ENCODE measurements at regions of chr1 and their contacts with region 1.

Region 1: GRCh38 chr1:6343506-6344405 is 49.8 kb downstream of the ACOT7 start:
- DNase-seq: peak; percentile 87
- H3K4me3 ChIP-seq: no peak overlapping the region
- H3K27ac ChIP-seq: no peak overlapping the region
- H3K4me1 ChIP-seq: no peaks in the 10 kb centered on the region
- H3K27me3 ChIP-seq: no peaks in the 10 kb centered on the region
- CTCF ChIP-seq: peak; percentile 97

Region 2: DNA sequence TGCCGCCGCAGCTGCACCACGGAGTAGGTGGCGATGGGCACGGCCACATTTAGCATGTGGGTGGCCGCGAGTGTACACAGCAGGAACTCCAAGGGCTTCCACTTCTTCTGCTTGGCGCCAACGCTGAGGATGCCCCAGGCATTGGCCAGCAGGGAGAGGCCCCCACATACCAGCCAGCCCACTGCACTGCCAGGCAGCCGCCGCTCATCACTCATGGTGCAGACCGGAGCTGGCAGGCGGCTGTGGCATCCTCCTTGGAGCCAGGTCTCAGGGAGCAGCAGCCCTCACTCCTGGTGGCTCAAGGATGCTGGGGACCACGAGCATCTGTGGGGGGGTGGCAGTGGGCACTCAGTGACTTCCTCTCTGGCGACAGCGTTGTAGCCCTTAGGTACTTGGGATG is 89.1 kb before region 1 on chr1:
- CTCF ChIA-PET with region 1: interaction called, 15 read pairs
- POLR2A ChIA-PET with region 1: no interaction called
- intact Hi-C with region 1: no loop called
- DNase-seq: no peak
- H3K4me3 ChIP-seq: no peak overlapping the region
- H3K27ac ChIP-seq: no peak overlapping the region
- H3K4me1 ChIP-seq: peaks cover 3% of the 10 kb centered on the region
- H3K27me3 ChIP-seq: peaks cover 6% of the 10 kb centered on the region
- CTCF ChIP-seq: no peak

Region 3: DNA sequence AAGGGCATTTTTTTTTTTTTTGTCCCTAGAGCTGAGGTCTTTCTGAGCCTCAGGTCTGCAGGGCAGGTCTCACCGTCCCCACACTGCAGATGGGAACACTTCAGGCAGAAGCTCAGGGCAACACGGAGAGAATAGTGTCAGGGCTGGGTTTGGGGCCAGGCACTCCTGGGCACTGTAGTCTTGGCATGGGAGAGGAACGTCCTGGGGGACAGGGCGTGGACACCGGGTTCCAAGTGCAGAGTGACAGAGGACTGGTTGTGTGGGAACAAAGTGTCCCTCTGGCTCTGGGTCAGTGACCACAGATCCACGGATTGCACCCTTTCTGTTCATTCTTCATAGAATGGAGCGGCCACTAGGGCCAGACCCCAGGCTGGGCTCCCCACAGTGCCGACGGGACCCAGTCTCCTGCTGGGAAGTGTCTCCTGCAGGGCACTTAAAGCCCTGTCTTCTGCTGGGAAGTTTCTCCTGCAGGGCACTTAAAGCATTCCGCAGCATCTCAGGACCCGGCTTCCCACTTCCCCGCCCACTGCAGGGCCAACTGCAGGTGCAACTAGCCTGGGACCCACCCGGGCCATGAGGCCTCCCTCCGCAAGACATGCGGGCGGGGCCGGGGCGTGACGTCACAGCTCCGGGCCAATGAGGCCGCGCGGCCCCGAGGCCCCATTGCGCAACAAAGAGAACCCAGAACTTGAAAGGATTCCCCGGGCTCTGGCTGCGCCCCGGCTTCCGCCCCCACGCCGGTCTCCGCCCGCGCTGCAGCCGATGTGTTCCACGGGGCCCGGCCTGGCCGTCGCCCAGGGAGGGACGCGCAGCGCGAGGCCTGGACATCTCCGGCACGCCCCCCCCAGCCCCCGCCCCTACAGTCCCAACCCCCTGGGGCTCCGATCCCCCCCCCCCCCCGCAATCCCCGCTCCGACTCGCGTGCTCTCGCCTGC is 84.0 kb before region 1 on chr1:
- CTCF ChIA-PET with region 1: interaction called, 15 read pairs
- POLR2A ChIA-PET with region 1: no interaction called
- intact Hi-C with region 1: loop called (anchors 5 kb)
- DNase-seq: peak; percentile 87
- H3K4me3 ChIP-seq: peak overlapping the region; percentile 62
- H3K27ac ChIP-seq: peak overlapping the region; percentile 42
- H3K4me1 ChIP-seq: peaks cover 20% of the 10 kb centered on the region
- H3K27me3 ChIP-seq: no peaks in the 10 kb centered on the region
- CTCF ChIP-seq: no peak

Region 4: GRCh38 chr1:6409053-6409452 is 65.3 kb after region 1 on chr1:
- CTCF ChIA-PET with region 1: interaction called, 10 read pairs
- POLR2A ChIA-PET with region 1: no interaction called
- intact Hi-C with region 1: no loop called
- DNase-seq: no peak
- H3K4me3 ChIP-seq: no peak overlapping the region
- H3K27ac ChIP-seq: no peak overlapping the region
- H3K4me1 ChIP-seq: no peaks in the 10 kb centered on the region
- H3K27me3 ChIP-seq: peaks cover 8% of the 10 kb centered on the region
- CTCF ChIP-seq: no peak

Measured in A673 (cell line).